Mammary epithelial cell (primary cell): ENCODE measurements at regions of chr10 and their contacts with region 1.

Region 1: GRCh38 chr10:30433730-30434272 is at the start of gene MAP3K8:
- DNase-seq: peak; percentile 82
- H3K4me3 ChIP-seq: peak within 1 kb of the TSS; percentile 68 to 84 (median 79)
- H3K27ac ChIP-seq: peak within 1 kb of the TSS; percentile 38
- H3K4me1 ChIP-seq: peaks cover 20% of the 10 kb centered on the region
- H3K27me3 ChIP-seq: no peaks in the 10 kb centered on the region
- CTCF ChIP-seq: no peak
- total RNA-seq, gene MAP3K8: 1.2 to 3.8 TPM

Region 2: GRCh38 chr10:30127120-30127541 is 306.7 kb before region 1 on chr10:
- CTCF ChIA-PET with region 1: no interaction called
- dilution Hi-C with region 1: no loop called
- in situ Hi-C with region 1: no loop called
- intact Hi-C with region 1: no loop called
- DNase-seq: no peak
- H3K4me3 ChIP-seq: no peak overlapping the region
- H3K27ac ChIP-seq: no peak overlapping the region
- H3K4me1 ChIP-seq: no peaks in the 10 kb centered on the region
- H3K27me3 ChIP-seq: no peaks in the 10 kb centered on the region
- CTCF ChIP-seq: no peak

Region 3: DNA sequence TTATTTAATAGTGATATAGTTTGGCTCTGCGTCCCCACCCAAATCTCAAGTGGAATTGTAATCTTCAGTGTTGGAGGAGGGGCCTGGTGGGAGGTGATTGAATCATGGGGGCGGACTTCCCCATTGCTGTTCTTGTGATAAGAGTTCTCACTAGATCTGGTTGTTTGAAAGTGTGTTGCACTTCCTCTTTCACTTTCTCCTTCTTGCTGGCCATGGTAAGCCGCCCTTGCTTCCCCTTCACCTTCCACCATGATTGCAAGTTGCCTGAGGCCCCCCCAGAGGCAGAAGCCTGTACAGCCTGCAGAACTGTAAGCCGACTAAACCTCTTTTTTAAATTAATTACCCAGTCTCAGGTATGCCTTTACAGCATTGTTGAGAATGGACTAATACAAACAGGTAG is 186.1 kb before region 1 on chr10:
- CTCF ChIA-PET with region 1: no interaction called
- dilution Hi-C with region 1: no loop called
- in situ Hi-C with region 1: no loop called
- intact Hi-C with region 1: no loop called
- DNase-seq: no peak
- H3K4me3 ChIP-seq: no peak overlapping the region
- H3K27ac ChIP-seq: no peak overlapping the region
- H3K4me1 ChIP-seq: no peaks in the 10 kb centered on the region
- H3K27me3 ChIP-seq: peaks cover 3% of the 10 kb centered on the region
- CTCF ChIP-seq: no peak

Region 4: GRCh38 chr10:30294479-30295240 is 139.1 kb before region 1 on chr10:
- CTCF ChIA-PET with region 1: no interaction called
- dilution Hi-C with region 1: no loop called
- in situ Hi-C with region 1: no loop called
- intact Hi-C with region 1: no loop called
- DNase-seq: no peak
- H3K4me3 ChIP-seq: no peak overlapping the region
- H3K27ac ChIP-seq: no peak overlapping the region
- H3K4me1 ChIP-seq: no peaks in the 10 kb centered on the region
- H3K27me3 ChIP-seq: no peaks in the 10 kb centered on the region
- CTCF ChIP-seq: no peak

Region 5: DNA sequence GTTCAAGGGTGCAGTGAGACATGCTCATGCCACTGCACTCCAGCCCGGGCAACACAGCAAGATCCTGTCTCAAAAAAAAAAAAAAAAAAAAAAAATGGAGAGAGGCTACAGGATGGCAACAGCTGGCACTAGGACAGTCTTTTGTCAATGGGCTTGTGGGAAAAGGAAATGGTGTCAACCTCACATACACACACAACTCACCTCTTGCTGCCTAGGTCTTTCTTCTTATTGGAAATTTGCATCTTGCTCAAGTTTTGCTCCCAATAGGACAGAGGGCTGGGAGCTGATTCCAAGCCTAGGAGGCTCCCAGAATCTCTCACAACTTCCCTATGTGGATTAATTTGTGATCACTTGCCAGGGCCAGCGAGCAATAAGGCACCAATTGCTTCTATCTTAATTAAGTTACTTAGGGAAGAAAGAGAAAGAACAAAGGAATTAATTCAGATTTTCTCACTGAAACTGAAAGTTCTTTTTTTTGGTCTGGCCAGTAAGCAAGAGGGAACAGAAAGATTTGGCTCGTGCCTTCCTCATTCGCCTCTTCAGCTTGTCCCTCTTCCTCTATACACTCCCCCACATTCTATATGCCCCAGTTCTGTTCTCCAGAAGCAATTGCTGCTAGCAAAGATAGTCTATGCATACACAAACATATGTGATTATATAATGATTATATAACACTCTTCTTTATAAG is 34.0 kb after region 1 on chr10:
- CTCF ChIA-PET with region 1: no interaction called
- dilution Hi-C with region 1: loop called (anchors 5 kb)
- in situ Hi-C with region 1: no loop called
- intact Hi-C with region 1: no loop called
- DNase-seq: no peak
- H3K4me3 ChIP-seq: no peak overlapping the region
- H3K27ac ChIP-seq: no peak overlapping the region
- H3K4me1 ChIP-seq: no peaks in the 10 kb centered on the region
- H3K27me3 ChIP-seq: no peaks in the 10 kb centered on the region
- CTCF ChIP-seq: no peak

Region 6: GRCh38 chr10:30493609-30494530 is 60.1 kb after region 1 on chr10:
- CTCF ChIA-PET with region 1: no interaction called
- dilution Hi-C with region 1: no loop called
- in situ Hi-C with region 1: no loop called
- intact Hi-C with region 1: loop called (anchors 5 kb)
- DNase-seq: peak; percentile 36
- H3K4me3 ChIP-seq: no peak overlapping the region
- H3K27ac ChIP-seq: no peak overlapping the region
- H3K4me1 ChIP-seq: no peaks in the 10 kb centered on the region
- H3K27me3 ChIP-seq: no peaks in the 10 kb centered on the region
- CTCF ChIP-seq: no peak

Region 7: DNA sequence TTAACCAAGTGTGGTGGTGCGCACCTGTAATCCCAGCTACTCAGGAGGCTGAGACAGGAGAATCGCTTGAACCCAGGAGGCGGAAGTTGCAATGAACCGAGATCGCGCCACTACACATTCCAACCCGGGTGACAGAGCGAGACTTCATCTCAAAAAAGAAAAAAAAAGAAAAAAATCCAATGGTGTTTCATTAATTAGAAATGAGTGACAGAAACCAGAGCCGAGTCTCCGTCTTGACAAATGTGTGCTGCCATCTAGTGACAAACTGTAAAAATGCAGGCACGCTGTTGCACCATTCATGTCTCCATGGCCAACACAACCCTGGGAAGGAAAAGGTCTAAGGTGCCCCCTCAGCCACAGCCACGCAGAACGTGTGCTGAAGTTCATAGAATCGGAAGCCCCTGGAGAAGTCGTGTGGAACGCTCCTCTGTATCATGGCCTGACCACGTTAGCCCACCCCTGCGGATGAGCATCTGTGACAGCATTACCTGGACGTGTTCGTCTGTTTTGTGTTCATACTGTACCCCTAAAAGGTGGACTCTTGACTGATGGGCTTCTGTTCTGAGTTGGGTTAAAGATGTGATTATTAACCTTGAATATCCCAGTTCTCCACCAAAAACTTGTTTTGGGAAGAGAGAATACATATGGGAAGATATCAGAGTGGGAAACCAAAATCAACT is 100.8 kb after region 1 on chr10:
- CTCF ChIA-PET with region 1: interaction called, 3 read pairs
- dilution Hi-C with region 1: loop called (anchors 5 kb)
- in situ Hi-C with region 1: no loop called
- intact Hi-C with region 1: loop called (anchors 1 kb)
- DNase-seq: peak; percentile 42
- H3K4me3 ChIP-seq: no peak overlapping the region
- H3K27ac ChIP-seq: no peak overlapping the region
- H3K4me1 ChIP-seq: peaks cover 5% of the 10 kb centered on the region
- H3K27me3 ChIP-seq: no peaks in the 10 kb centered on the region
- CTCF ChIP-seq: peak; percentile 80 to 89